MCF 10A (cell line): ENCODE measurements at regions of chr1 and their contacts with region 1.

Region 1: DNA sequence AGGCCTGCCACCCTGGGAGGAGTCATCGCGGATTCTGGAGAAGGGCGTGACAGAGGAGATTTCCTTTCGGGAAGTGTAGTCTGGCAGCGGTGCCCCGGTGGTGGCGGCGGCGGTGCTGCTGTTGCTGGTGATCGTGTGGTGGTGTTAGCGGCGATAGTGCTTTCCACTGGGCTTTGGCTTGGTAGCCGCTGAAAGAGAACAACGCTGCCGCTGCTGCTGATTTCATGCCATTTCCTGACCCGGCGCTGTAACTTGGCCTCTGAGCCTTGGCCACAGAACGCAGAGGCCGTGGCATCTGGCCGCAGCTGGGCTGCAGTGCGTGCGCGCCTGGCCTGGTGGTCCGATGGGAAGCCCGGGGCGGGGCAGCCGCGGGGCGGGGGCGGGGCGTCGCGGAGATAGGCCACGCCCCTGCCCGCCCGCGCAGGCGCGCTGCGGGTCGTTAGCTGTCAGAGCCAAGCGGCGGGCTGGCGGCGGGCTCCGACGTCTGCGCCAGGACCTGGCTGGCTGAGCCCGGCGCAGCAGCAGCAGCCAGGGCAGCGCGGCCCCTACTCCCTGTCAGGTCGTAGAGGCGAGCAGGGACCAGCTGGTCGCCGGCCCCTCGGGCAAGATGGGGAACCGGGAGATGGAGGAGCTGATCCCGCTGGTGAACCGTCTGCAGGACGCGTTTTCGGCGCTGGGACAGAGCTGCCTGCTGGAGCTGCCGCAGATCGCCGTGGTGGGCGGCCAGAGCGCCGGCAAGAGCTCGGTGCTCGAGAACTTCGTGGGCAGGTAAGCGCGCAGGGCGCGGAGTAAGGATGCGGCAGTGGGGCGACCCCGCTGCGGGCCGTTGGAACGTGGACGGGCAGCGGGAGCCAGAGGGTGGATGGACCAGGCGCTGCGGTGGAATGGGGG is at the start of gene DNM3:
- DNase-seq: peak; percentile 74
- H3K4me3 Mint-ChIP-seq: peak within 1 kb of the TSS; percentile 71
- H3K27ac Mint-ChIP-seq: peak within 1 kb of the TSS; percentile 73
- H3K4me1 Mint-ChIP-seq: peaks cover 16% of the 10 kb centered on the region
- H3K27me3 Mint-ChIP-seq: peaks cover 33% of the 10 kb centered on the region
- CTCF ChIP-seq: no peak
- total RNA-seq, gene DNM3: 0.44 and 0.68 TPM in 2 replicates

Region 2: DNA sequence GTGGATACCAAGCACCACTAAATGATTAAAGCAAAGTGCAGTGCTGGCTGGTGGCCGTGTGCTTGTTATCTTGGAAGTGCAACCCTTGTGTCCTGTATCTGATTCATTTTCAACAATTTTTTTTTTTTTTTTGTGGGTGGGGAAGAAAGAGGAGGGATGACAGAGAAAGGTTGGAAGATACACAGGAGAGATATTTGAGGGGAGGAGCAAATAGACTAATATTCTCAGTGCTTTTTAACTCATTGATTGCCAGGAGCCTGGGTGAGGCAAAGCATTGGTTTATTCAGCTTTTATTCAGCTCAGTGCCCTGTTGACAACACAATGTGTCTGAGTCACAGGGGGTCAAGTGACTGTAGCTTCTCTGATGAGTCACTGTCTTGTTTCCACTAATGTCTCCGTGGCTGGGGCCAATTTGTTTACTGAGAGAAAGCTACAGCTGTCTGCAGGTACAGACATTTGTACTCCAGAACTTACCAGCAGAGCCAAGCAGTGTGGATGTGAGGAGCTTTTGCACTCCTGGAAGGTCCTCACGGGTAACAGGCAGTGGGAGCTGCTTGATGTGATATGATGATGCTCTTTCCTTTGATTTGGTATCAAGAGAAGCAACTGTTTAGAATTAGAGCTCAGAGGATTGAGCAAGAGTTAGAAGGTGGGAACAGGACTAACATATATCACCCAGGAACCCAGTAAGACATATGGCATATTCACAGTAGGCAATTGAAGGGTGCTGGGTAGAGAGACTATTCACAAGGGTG is 23.6 kb before region 1 on chr1:
- CTCF ChIA-PET with region 1: interaction called, 5 read pairs
- POLR2A ChIA-PET with region 1: interaction called, 18 read pairs
- intact Hi-C with region 1: no loop called
- DNase-seq: peak; percentile 94
- H3K4me3 Mint-ChIP-seq: peak overlapping the region; percentile 3
- H3K27ac Mint-ChIP-seq: peak overlapping the region; percentile 90
- H3K4me1 Mint-ChIP-seq: peaks cover 23% of the 10 kb centered on the region
- H3K27me3 Mint-ChIP-seq: no peaks in the 10 kb centered on the region
- CTCF ChIP-seq: no peak

Region 3: GRCh38 chr1:171965777-171966176 is 124.5 kb after region 1 on chr1:
- CTCF ChIA-PET with region 1: interaction called, 12 read pairs
- POLR2A ChIA-PET with region 1: no interaction called
- intact Hi-C with region 1: no loop called
- DNase-seq: no peak
- H3K4me3 Mint-ChIP-seq: no peak overlapping the region
- H3K27ac Mint-ChIP-seq: no peak overlapping the region
- H3K4me1 Mint-ChIP-seq: no peaks in the 10 kb centered on the region
- H3K27me3 Mint-ChIP-seq: no peaks in the 10 kb centered on the region
- CTCF ChIP-seq: no peak

Region 4: GRCh38 chr1:172338295-172338735 is 497.0 kb after region 1 on chr1:
- CTCF ChIA-PET with region 1: no interaction called
- POLR2A ChIA-PET with region 1: no interaction called
- intact Hi-C with region 1: no loop called
- DNase-seq: no peak
- H3K4me3 Mint-ChIP-seq: no peak overlapping the region
- H3K27ac Mint-ChIP-seq: no peak overlapping the region
- H3K4me1 Mint-ChIP-seq: peaks cover 18% of the 10 kb centered on the region
- H3K27me3 Mint-ChIP-seq: no peaks in the 10 kb centered on the region
- CTCF ChIP-seq: no peak